Caco-2 (cell line): ENCODE measurements at regions of chr18 and their contacts with region 1.

Region 1: GRCh38 chr18:48230467-48231113 is 178.6 kb downstream of the ZBTB7C start:
- DNase-seq: peak; percentile 44 to 52
- H3K4me3 ChIP-seq: no peak overlapping the region
- H3K4me3 Mint-ChIP-seq: no peak overlapping the region
- H3K27ac Mint-ChIP-seq: no peak overlapping the region
- H3K4me1 ChIP-seq: no peaks in the 10 kb centered on the region
- H3K4me1 Mint-ChIP-seq: no peaks in the 10 kb centered on the region
- H3K27me3 ChIP-seq: no peaks in the 10 kb centered on the region
- H3K27me3 Mint-ChIP-seq: peaks cover 5% of the 10 kb centered on the region
- CTCF ChIP-seq: peak in 1 of 2 experiments; percentile 44

Region 2: DNA sequence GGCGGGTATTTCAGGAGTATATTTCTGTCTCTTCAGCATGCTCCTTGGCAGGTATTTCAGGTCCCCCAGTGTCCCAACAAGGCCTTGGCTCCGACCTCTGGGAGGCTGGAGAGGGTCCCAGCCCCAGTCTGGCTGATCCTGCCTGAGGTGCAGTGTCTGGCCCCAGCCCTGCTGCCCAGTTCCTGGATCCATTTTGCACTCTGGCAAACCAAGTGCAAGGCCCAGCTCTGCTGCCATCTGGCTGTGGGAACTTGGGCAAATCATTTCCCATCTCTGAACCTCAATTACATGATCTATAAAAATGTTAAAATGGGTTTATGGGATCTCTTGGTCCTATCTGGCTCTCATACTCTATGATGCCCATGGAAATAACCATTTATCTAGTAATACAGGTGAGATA is 115.0 kb after region 1 on chr18:
- CTCF ChIA-PET with region 1: no interaction called
- POLR2A ChIA-PET with region 1: no interaction called
- intact Hi-C with region 1: loop called (anchors 1 kb)
- DNase-seq: no peak
- H3K4me3 ChIP-seq: no peak overlapping the region
- H3K4me3 Mint-ChIP-seq: no peak overlapping the region
- H3K27ac Mint-ChIP-seq: no peak overlapping the region
- H3K4me1 ChIP-seq: no peaks in the 10 kb centered on the region
- H3K4me1 Mint-ChIP-seq: no peaks in the 10 kb centered on the region
- H3K27me3 ChIP-seq: no peaks in the 10 kb centered on the region
- H3K27me3 Mint-ChIP-seq: no peaks in the 10 kb centered on the region
- CTCF ChIP-seq: no peak

Region 3: GRCh38 chr18:48445540-48445939 is 214.9 kb after region 1 on chr18:
- CTCF ChIA-PET with region 1: interaction called, 5 read pairs
- POLR2A ChIA-PET with region 1: no interaction called
- intact Hi-C with region 1: loop called (anchors 1 kb)
- DNase-seq: peak; percentile 71 to 79
- H3K4me3 ChIP-seq: no peak overlapping the region
- H3K4me3 Mint-ChIP-seq: no peak overlapping the region
- H3K27ac Mint-ChIP-seq: no peak overlapping the region
- H3K4me1 ChIP-seq: no peaks in the 10 kb centered on the region
- H3K4me1 Mint-ChIP-seq: no peaks in the 10 kb centered on the region
- H3K27me3 ChIP-seq: no peaks in the 10 kb centered on the region
- H3K27me3 Mint-ChIP-seq: peaks cover 2% of the 10 kb centered on the region
- CTCF ChIP-seq: peak; percentile 60 to 66